Activated CD4-positive, alpha-beta memory T cell treated with anti-CD3 and anti-CD28 coated beads, Interleukin-2, amount 10 ng/mL, durations not matched to agents 7 days and 5 days (primary cell): ENCODE measurements at regions of chr5 and their contacts with region 1.

Region 1: GRCh38 chr5:134904630-134905245 is at the start of gene PCBD2:
- DNase-seq: peak; percentile 94
- H3K4me3 Mint-ChIP-seq: peak within 1 kb of the TSS; percentile 95
- H3K27ac Mint-ChIP-seq: peak within 1 kb of the TSS; percentile 98
- H3K4me1 Mint-ChIP-seq: peaks cover 29% of the 10 kb centered on the region
- H3K27me3 Mint-ChIP-seq: no peaks in the 10 kb centered on the region
- total RNA-seq, gene PCBD2: 13.6 to 14.7 TPM

Region 2: GRCh38 chr5:134758504-134759341 is 146.0 kb before region 1 on chr5 and contains the start of gene DDX46:
- CTCF ChIA-PET with region 1: interaction called, 18 read pairs
- POLR2A ChIA-PET with region 1: interaction called, 21 read pairs
- DNase-seq: peak; percentile 95
- H3K4me3 Mint-ChIP-seq: peak within 1 kb of the TSS; percentile 95
- H3K27ac Mint-ChIP-seq: peak within 1 kb of the TSS; percentile 88
- H3K4me1 Mint-ChIP-seq: peaks cover 38% of the 10 kb centered on the region
- H3K27me3 Mint-ChIP-seq: no peaks in the 10 kb centered on the region
- total RNA-seq, gene DDX46: 51.8 to 56.7 TPM

Region 3: DNA sequence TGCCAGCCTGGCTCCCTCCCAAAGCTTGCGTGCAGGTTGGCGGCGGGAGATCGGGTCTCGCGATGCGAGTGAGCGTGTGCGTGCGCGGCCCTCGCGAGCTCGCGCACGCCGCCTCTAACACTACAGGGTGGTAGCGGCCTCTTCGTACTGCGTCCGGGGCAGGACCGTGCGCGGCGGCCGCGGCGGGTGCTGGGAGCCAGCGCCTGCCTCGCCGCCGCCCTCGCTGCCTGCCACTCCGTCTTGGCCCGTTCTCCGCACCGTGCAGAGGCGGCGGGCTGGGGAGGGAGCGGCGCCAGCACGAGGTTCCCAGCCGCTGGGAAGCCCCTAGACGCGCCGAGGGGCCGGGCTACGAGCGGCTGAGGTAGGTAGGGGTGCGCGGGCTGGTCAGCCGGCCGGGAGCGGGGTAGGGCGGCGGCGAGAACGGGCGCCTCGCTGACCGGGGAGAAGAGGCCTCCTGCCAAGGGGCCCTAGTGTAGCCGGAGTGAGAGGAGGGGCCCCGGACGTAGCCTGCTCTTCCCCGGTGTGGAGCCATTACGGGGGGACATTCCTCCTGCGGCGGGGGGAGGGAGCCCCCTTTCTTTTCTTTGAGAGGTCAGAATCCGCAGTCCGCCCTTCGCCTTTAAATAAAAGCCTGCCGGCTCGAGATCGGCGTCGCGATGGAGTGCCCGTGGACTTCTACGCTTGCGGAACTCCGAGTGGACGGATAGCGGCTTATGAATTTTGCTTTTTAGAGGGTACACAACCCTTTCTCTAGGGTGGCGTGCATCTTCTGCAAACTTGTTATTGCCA is 58.7 kb before region 1 on chr5 and contains the start of gene C5orf24:
- CTCF ChIA-PET with region 1: interaction called, 27 read pairs
- POLR2A ChIA-PET with region 1: interaction called, 44 read pairs
- DNase-seq: peak; percentile 95
- H3K4me3 Mint-ChIP-seq: peak within 1 kb of the TSS; percentile 80
- H3K27ac Mint-ChIP-seq: peak within 1 kb of the TSS; percentile 93
- H3K4me1 Mint-ChIP-seq: peaks cover 34% of the 10 kb centered on the region
- H3K27me3 Mint-ChIP-seq: no peaks in the 10 kb centered on the region
- total RNA-seq, gene C5orf24: 32.3 to 32.5 TPM

Region 4: GRCh38 chr5:134857401-134857800 is 47.3 kb before region 1 on chr5:
- CTCF ChIA-PET with region 1: interaction called, 6 read pairs
- POLR2A ChIA-PET with region 1: interaction called, 14 read pairs
- DNase-seq: no peak
- H3K4me3 Mint-ChIP-seq: no peak overlapping the region
- H3K27ac Mint-ChIP-seq: no peak overlapping the region
- H3K4me1 Mint-ChIP-seq: peaks cover 21% of the 10 kb centered on the region
- H3K27me3 Mint-ChIP-seq: no peaks in the 10 kb centered on the region

Region 5: GRCh38 chr5:134887593-134888159 is 17.1 kb before region 1 on chr5:
- CTCF ChIA-PET with region 1: interaction called, 11 read pairs
- POLR2A ChIA-PET with region 1: interaction called, 3 read pairs
- DNase-seq: no peak
- H3K4me3 Mint-ChIP-seq: no peak overlapping the region
- H3K27ac Mint-ChIP-seq: no peak overlapping the region
- H3K4me1 Mint-ChIP-seq: peaks cover 6% of the 10 kb centered on the region
- H3K27me3 Mint-ChIP-seq: no peaks in the 10 kb centered on the region

Region 6: GRCh38 chr5:134989266-134989830 is 84.6 kb after region 1 on chr5:
- CTCF ChIA-PET with region 1: no interaction called
- POLR2A ChIA-PET with region 1: no interaction called
- DNase-seq: no peak
- H3K4me3 Mint-ChIP-seq: no peak overlapping the region
- H3K27ac Mint-ChIP-seq: no peak overlapping the region
- H3K4me1 Mint-ChIP-seq: no peaks in the 10 kb centered on the region
- H3K27me3 Mint-ChIP-seq: peaks cover 6% of the 10 kb centered on the region

Region 7: GRCh38 chr5:135053278-135053677 is 148.5 kb after region 1 on chr5:
- CTCF ChIA-PET with region 1: no interaction called
- POLR2A ChIA-PET with region 1: no interaction called
- DNase-seq: no peak
- H3K4me3 Mint-ChIP-seq: no peak overlapping the region
- H3K27ac Mint-ChIP-seq: no peak overlapping the region
- H3K4me1 Mint-ChIP-seq: no peaks in the 10 kb centered on the region
- H3K27me3 Mint-ChIP-seq: peaks cover 71% of the 10 kb centered on the region